Common myeloid progenitor, CD34-positive (primary cell): ENCODE measurements at regions of chr13 and their contacts with region 1.

Region 1: DNA sequence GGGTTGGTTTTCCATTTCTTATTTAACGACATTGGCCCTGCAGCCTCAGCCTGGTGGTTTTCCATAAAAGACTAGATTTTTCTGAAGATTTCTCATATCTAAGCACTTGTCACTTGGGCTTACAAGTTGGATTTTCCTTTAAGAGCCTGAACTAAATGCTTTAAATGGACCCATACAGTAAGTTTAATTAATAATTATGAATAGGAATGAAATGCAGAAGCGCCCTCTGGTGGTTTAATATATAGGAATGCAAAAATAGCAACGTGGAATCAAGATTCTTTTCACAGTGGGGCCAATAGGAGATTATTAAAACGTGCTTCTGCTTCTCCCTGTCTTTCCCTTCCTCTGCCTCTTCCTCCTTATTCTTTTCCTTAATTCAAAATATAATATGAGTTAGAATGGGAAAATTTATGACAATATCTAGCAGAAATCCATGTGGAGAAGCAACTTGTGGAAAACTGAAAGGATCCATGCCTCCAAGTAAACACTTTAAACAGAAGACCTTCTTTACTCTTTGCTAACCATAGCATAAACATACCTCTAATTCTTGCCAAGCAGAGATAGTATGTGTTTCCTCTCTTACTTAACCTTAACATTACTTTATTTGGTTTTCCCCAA is 324.0 kb downstream of the GPC5 start:
- DNase-seq: peak; percentile 18 to 55 (median 48)
- H3K4me3 ChIP-seq: no peak overlapping the region
- H3K27ac ChIP-seq: no peak overlapping the region
- H3K4me1 ChIP-seq: peaks cover 0 to 4% (median 0%) of the 10 kb centered on the region in 4 experiments
- H3K27me3 ChIP-seq: no peaks in the 10 kb centered on the region

Region 2: DNA sequence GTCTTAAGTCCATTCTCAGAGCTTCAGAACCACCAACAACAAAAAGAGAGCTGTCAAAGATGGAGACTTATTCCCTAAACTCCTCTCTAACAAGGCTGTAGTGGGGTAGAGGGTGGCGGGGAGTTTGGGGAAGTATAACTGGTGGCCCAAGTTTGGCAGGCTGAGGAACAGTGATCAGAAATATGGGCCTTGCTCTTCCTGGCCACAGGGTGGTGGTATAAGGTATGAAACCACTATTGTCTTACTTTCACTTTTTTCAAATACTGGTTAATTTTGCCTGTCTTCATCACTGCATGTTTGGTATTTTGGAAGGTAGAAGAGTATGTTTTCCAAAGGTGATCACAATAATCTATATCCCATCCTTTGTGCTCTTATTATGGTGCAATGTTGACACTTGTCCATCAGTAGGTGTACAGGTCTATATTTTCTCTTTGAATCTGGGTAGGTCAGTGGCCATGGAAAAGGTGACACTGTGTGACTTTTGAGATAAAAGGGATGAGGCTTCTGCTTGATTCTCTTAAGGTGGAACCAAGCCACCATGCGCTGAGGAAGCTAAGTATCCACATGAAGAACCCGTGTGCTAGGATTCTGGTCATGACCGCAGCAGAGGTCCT is 347.2 kb before region 1 on chr13:
- CTCF ChIA-PET with region 1: interaction called, 74 read pairs
- POLR2A ChIA-PET with region 1: no interaction called
- DNase-seq: peak; percentile 51 to 81 (median 81)
- H3K4me3 ChIP-seq: no peak overlapping the region
- H3K27ac ChIP-seq: no peak overlapping the region
- H3K4me1 ChIP-seq: peaks cover 0 to 2% (median 0%) of the 10 kb centered on the region in 4 experiments
- H3K27me3 ChIP-seq: no peaks in the 10 kb centered on the region

Region 3: DNA sequence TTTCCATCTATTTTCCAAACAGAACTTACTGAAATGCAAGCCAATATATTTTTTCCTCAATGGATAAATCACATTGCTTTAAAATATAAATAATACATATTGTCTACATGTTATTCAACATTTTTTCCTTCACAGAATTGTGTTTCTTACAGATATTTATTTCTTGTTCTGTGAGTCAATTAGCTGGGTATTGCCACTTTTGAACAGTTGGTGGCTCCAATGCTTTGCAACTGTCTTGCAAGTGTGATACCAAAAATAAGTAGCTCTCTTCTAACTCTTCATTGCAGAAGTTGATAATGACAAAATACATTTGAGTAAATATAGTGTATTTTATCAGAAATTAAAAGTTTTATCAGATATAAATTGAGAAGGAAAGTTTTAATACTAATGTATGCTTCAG is 341.0 kb before region 1 on chr13:
- CTCF ChIA-PET with region 1: interaction called, 74 read pairs
- POLR2A ChIA-PET with region 1: no interaction called
- DNase-seq: peak; percentile 55 to 76 (median 74)
- H3K4me3 ChIP-seq: no peak overlapping the region
- H3K27ac ChIP-seq: no peak overlapping the region
- H3K4me1 ChIP-seq: no peaks in the 10 kb centered on the region
- H3K27me3 ChIP-seq: no peaks in the 10 kb centered on the region